Sigmoid colon (tissue), 7 donors: ENCODE measurements at regions of chr10 and their contacts with region 1.

Region 1: DNA sequence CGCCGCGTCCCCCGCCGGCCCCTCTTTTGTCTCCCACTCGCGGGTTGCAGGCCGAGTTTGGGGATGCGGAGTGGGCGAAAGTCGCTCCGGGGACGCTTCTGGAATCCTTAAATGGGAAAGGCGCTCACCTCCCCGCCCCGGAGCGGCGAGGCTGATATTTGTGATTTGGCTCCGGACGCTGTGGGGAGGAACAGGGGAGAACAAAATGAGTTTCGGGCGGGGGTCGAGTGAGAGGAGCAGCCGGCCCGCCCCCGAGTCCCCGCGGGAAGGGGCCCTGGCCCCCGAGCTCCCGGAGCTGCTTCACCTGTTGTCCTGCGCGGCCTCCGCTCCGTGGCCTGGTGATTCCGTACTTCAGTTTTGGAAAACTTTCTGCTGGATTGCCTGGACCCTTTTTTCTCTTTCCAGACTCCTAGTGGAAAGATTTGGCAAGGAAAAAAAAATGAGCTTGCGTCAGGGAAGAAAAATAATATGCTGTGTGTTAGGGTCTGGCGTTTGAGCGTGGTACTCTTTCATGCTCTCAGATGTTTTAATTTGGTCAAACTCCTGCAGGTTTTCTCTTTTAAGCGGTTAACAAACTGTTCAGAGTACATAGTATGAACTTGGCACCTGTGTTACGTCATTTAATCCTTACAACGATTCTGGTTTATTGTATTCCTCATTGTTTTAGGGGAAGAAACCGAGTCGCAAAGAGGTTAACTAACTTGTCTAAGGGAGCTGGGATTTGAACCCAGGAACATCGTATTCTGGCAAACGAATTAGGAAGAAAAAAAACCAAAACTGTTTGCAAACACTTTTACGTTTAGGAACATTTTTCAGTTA is 904 bp downstream of the BMPR1A start:
- DNase-seq: peak; percentile 82
- H3K4me3 ChIP-seq: peak overlapping the region; percentile 69 to 88 (median 83)
- H3K27ac ChIP-seq: peak overlapping the region; percentile 98 to 100 (median 99)
- H3K4me1 ChIP-seq: peaks cover 0 to 63% (median 52%) of the 10 kb centered on the region in 4 donors
- H3K27me3 ChIP-seq: no peaks in the 10 kb centered on the region
- CTCF ChIP-seq: peak in 3 of 4 experiments; percentile 14 to 43 (median 39)
- EP300 ChIP-seq: no peak
- POLR2A ChIP-seq: peak in 1 of 2 donors; percentile 33

Region 2: GRCh38 chr10:86710987-86711512 is 46.3 kb before region 1 on chr10:
- intact Hi-C with region 1: loop called (anchors 1 kb)
- DNase-seq: peak; percentile 97
- H3K4me3 ChIP-seq: peak overlapping the region; percentile 45 to 82 (median 66)
- H3K27ac ChIP-seq: peak overlapping the region; percentile 93 to 99 (median 96)
- H3K4me1 ChIP-seq: peaks cover 0 to 32% (median 22%) of the 10 kb centered on the region in 4 donors
- H3K27me3 ChIP-seq: no peaks in the 10 kb centered on the region
- CTCF ChIP-seq: peak; percentile 76 to 88 (median 80)
- EP300 ChIP-seq: no peak
- POLR2A ChIP-seq: peak; percentile 44 to 77

Region 3: GRCh38 chr10:86733260-86733671 is 24.1 kb before region 1 on chr10:
- intact Hi-C with region 1: loop called (anchors 1 kb)
- DNase-seq: peak; percentile 95
- H3K4me3 ChIP-seq: no peak overlapping the region
- H3K27ac ChIP-seq: peak overlapping the region; percentile 87 to 97 (median 94)
- H3K4me1 ChIP-seq: peaks cover 0 to 87% (median 68%) of the 10 kb centered on the region in 4 donors
- H3K27me3 ChIP-seq: no peaks in the 10 kb centered on the region
- CTCF ChIP-seq: no peak
- EP300 ChIP-seq: peak; percentile 94 to 100 (median 98)
- POLR2A ChIP-seq: peak in 1 of 2 donors; percentile 32

Region 4: GRCh38 chr10:87068281-87068680 is 311.0 kb after region 1 on chr10:
- intact Hi-C with region 1: no loop called
- DNase-seq: no peak
- H3K4me3 ChIP-seq: no peak overlapping the region
- H3K27ac ChIP-seq: no peak overlapping the region
- H3K4me1 ChIP-seq: no peaks in the 10 kb centered on the region
- H3K27me3 ChIP-seq: no peaks in the 10 kb centered on the region
- CTCF ChIP-seq: no peak
- EP300 ChIP-seq: no peak
- POLR2A ChIP-seq: no peak